ENCODE measurements at regions of chr17 and their contacts with region 1.

Region 1: DNA sequence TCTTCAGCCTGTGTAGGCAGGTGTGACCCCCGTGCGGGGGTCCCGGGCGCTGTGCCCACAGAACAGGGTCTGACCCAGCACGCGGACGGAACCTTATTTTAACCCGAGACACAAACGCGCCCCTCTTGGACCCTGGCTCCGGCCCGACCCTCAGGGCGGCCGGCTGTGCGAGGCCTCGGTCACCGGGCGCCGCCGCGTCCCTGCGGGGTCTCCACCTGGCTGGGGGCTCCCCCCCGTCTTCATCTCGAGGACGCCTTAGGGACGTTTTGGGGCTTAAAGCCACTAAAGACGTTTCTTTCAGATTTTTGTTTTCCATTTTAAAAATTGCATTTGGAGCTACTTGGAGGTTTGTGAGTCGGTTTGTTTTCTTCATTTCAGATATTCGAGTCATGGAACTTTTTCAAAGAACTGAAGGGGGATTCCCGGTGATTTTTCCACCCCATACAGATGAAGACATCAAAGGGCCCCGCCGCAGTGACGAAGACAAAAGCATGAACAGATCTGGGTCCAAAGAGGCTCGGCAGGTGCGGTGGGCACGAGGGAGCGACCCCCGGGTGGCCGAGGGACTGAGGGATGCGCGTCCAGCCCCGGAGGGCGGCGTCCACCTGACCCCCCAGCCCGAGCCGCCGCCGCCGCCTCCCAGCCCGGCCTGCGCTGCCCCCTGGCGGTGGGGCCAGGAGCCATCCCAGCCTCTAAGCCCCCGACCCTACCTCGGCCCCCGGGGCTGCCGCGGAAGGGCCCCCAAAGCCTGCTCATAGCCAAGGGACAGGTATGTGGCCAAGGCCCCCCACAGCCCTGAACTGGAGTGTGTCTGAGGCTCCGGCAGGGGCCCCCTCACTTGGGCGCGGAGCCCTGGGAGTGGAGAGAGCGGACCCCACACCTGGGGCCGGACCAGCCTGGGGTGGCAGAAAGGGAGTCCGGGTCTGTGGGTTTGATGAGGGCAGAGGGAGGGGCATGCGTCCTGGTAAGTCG is 3.8 kb upstream of the CD7 start:
- DNase-seq: no peak
- H3K4me3 ChIP-seq: no peak overlapping the region
- H3K27ac ChIP-seq: no peak overlapping the region
- H3K4me1 ChIP-seq: no peaks in the 10 kb centered on the region
- H3K27me3 ChIP-seq: no peaks in the 10 kb centered on the region
- CTCF ChIP-seq: peak; percentile 95 to 99 (median 98)
- POLR2A ChIP-seq: no peak

Region 2: GRCh38 chr17:82205719-82206508 is 115.3 kb before region 1 on chr17:
- intact Hi-C with region 1: loop called (anchors 5 kb)
- DNase-seq: peak; percentile 85
- H3K4me3 ChIP-seq: no peak overlapping the region
- H3K27ac ChIP-seq: peak overlapping the region; percentile 79 to 82
- H3K4me1 ChIP-seq: no peaks in the 10 kb centered on the region
- H3K27me3 ChIP-seq: no peaks in the 10 kb centered on the region
- CTCF ChIP-seq: peak; percentile 80 to 97 (median 88)
- POLR2A ChIP-seq: no peak

Region 3: DNA sequence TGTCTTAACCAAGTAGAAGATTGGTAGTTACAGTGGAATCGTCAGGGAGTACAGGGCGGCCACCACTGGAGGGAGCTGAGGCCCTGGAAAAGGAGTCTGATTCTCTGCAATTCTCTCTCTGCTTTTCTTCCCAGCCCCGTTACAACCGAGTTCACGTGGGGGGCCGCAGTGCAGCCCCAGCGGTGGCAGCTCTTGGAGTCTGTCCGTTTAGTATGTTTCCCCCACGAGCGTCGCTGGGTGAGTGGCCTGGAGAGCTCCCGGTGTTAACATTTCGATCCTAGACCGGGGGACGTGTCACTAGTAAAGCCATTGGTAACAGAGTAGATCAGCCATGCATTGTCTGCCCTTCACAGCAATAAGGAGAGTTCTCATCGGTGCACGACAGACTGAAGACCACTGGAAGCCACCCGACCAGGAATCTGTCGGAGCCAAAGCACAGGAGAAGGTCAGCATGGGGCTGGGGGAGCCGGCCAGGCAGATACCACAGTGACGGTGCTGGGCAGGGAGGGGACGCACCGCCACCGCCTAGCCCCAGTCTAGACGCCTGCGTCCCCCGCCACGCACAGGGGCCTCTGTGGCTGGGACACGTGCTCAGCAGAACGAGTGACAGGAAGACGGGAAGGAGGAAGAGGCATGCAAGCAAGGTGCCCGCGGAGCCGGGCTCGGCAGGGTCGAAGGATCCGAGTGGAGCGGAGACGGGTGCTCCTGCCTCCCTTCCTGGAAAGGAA is 76.7 kb before region 1 on chr17:
- intact Hi-C with region 1: loop called (anchors 2 kb)
- DNase-seq: no peak
- H3K4me3 ChIP-seq: no peak overlapping the region
- H3K27ac ChIP-seq: peak overlapping the region in 1 of 2 donors; percentile 80
- H3K4me1 ChIP-seq: peaks cover 49% of the 10 kb centered on the region
- H3K27me3 ChIP-seq: no peaks in the 10 kb centered on the region
- CTCF ChIP-seq: peak; percentile 24 to 65 (median 60)
- POLR2A ChIP-seq: no peak

Region 4: DNA sequence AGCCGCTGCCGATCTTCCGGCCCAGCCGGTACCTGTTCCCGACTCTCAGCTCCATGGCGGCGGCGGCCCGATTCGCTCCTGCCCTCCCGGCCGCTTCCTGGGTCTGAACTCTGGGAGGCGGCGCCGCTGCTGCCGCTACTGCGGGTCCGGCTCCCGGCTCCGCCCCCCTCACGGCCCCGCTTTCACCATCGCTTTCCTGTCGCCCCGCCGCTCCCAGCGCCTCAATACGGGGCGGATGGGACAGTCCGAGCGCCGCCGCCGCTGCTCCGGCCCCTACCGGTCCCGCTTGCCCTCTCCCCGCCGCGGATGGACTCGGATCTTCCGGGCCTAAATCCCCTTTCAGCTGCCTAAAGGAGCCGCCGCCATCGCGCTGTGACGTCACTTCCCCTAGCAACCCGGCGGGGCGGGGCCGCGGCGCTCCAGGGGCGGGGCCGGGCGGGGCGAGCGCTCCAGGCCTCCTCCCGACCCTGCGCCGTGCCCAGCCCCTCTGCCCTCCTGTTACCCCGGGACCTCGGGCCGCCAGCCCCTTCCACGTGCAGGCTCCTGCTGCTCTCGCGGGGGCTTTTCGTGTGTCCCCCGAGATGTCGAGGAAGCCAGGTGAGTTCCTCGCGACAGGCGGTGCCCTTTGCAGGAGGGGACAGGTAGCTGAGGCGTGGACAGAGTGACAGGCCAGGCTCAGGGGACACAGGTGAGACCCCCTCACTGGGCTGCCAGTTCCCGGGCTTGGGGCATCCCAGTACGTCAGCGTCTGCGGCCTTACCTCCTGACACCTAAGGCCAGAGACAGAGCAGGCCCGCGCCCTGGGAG is 47.7 kb before region 1 on chr17 and contains the start of gene CSNK1D:
- intact Hi-C with region 1: no loop called
- DNase-seq: peak; percentile 90
- H3K4me3 ChIP-seq: peak within 1 kb of the TSS; percentile 89 to 98
- H3K27ac ChIP-seq: peak within 1 kb of the TSS; percentile 98 to 99
- H3K4me1 ChIP-seq: peaks cover 27% of the 10 kb centered on the region
- H3K27me3 ChIP-seq: no peaks in the 10 kb centered on the region
- CTCF ChIP-seq: peak in 1 of 4 experiments; percentile 24
- POLR2A ChIP-seq: peak; percentile 75
- total RNA-seq, gene CSNK1D: 80.3 to 155 TPM

Region 5: GRCh38 chr17:82358465-82359350 is 37.5 kb after region 1 on chr17 and contains the start of gene TEX19:
- intact Hi-C with region 1: no loop called
- DNase-seq: no peak
- H3K4me3 ChIP-seq: no peak within 1 kb of the TSS
- H3K27ac ChIP-seq: no peak within 1 kb of the TSS
- H3K4me1 ChIP-seq: no peaks in the 10 kb centered on the region
- H3K27me3 ChIP-seq: no peaks in the 10 kb centered on the region
- CTCF ChIP-seq: no peak
- POLR2A ChIP-seq: no peak
- total RNA-seq, gene TEX19: 10.6 TPM in 1 of 2 donors, not detected in the other

Region 6: GRCh38 chr17:82450170-82451106 is 129.2 kb after region 1 on chr17 and contains the start of gene CYBC1:
- intact Hi-C with region 1: no loop called
- DNase-seq: peak; percentile 91
- H3K4me3 ChIP-seq: peak within 1 kb of the TSS; percentile 72 to 80
- H3K27ac ChIP-seq: peak within 1 kb of the TSS; percentile 83 to 84
- H3K4me1 ChIP-seq: peaks cover 12% of the 10 kb centered on the region
- H3K27me3 ChIP-seq: no peaks in the 10 kb centered on the region
- CTCF ChIP-seq: peak in 1 of 4 experiments; percentile 32
- POLR2A ChIP-seq: no peak
- total RNA-seq, gene CYBC1: 74.3 to 81.8 TPM